Activated CD4-positive, alpha-beta T cell treated with anti-CD3 and anti-CD28 coated beads for 36 hours (primary cell): ENCODE measurements at regions of chr2 and their contacts with region 1.

Region 1: DNA sequence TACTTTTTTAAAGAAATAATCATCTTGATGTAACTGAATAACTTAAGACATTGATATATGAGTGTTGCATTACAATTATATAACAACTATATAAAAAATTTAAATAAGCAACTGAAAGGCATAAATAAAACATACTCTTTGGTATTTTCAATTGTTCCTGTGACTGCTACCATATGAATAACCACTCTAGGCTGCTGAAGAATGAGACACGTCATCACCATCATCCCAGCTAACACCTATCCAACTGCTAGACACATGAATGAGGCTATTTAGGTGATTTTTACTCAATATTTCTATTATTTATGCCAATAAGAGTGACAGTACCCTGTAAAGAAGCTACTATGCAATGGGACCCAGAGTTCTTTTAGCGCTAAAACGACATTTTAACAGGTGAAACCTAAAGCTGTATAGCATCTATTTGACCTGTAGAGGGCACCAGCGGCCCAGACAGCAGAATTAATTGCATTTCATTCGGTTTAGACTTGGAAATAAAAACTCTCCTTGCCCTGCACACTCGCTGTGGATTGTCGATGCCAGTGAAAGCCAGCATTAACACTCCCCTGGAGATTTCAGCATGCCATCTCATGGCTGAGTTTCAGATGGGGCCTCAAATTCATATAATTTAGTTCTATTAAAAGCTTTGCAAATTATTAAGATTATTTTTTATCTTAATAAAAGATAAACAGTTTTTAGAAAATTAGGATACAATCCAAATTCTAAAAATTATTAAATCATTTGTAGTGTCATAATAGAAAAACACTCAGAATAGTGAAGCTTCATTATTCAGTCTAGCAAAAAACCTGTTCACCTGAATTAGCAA is 89.4 kb upstream of the MAP2 start:
- DNase-seq: peak; percentile 68
- ATAC-seq: peak; percentile 47
- H3K4me3 Mint-ChIP-seq: no peak overlapping the region
- H3K27ac Mint-ChIP-seq: no peak overlapping the region
- H3K4me1 Mint-ChIP-seq: no peaks in the 10 kb centered on the region
- H3K27me3 Mint-ChIP-seq: no peaks in the 10 kb centered on the region

Region 2: GRCh38 chr2:208466151-208466919 is 868.1 kb before region 1 on chr2:
- CTCF ChIA-PET with region 1: no interaction called
- POLR2A ChIA-PET with region 1: no interaction called
- intact Hi-C with region 1: loop called in 1 of 2 experiments (anchors 2 kb)
- DNase-seq: peak; percentile 36
- ATAC-seq: no peak
- H3K4me3 Mint-ChIP-seq: no peak overlapping the region
- H3K27ac Mint-ChIP-seq: no peak overlapping the region
- H3K4me1 Mint-ChIP-seq: no peaks in the 10 kb centered on the region
- H3K27me3 Mint-ChIP-seq: peaks cover 9% of the 10 kb centered on the region

Region 3: GRCh38 chr2:209351636-209352035 is 17.2 kb after region 1 on chr2:
- CTCF ChIA-PET with region 1: interaction called, 10 read pairs
- POLR2A ChIA-PET with region 1: interaction called, 3 read pairs
- intact Hi-C with region 1: no loop called
- DNase-seq: no peak
- ATAC-seq: no peak
- H3K4me3 Mint-ChIP-seq: no peak overlapping the region
- H3K27ac Mint-ChIP-seq: no peak overlapping the region
- H3K4me1 Mint-ChIP-seq: no peaks in the 10 kb centered on the region
- H3K27me3 Mint-ChIP-seq: no peaks in the 10 kb centered on the region

Region 4: DNA sequence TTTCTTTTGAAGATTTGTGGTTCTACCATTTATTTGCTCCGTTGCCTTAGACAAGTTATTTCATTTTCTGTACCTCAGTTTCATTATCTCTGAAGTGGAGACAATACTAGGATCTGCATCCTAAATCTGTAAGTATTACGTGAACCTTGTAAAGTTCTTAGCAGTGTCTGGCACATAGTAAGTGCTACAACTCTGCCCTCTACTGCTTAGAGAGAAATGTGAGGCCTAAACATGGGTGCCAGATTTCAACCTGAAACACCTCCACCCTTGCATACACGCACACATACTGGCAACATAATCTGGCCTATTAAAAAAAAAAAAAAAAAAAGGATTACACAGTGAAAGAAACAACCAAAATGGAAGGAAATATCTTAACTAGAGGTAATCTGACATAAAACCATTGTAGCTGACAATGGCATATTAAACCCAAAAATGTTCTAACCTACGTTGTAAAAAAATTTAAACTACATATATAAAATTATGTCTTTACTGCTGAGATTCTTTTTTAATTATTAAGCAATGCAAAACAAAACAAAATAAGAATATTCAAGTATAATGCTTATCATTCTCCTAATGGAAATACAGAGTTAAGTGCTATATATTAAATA is 222.1 kb after region 1 on chr2:
- CTCF ChIA-PET with region 1: interaction called, 5 read pairs
- POLR2A ChIA-PET with region 1: no interaction called
- intact Hi-C with region 1: loop called in 1 of 2 experiments (anchors 5 kb)
- DNase-seq: no peak
- ATAC-seq: no peak
- H3K4me3 Mint-ChIP-seq: no peak overlapping the region
- H3K27ac Mint-ChIP-seq: no peak overlapping the region
- H3K4me1 Mint-ChIP-seq: no peaks in the 10 kb centered on the region
- H3K27me3 Mint-ChIP-seq: peaks cover 3% of the 10 kb centered on the region

Region 5: DNA sequence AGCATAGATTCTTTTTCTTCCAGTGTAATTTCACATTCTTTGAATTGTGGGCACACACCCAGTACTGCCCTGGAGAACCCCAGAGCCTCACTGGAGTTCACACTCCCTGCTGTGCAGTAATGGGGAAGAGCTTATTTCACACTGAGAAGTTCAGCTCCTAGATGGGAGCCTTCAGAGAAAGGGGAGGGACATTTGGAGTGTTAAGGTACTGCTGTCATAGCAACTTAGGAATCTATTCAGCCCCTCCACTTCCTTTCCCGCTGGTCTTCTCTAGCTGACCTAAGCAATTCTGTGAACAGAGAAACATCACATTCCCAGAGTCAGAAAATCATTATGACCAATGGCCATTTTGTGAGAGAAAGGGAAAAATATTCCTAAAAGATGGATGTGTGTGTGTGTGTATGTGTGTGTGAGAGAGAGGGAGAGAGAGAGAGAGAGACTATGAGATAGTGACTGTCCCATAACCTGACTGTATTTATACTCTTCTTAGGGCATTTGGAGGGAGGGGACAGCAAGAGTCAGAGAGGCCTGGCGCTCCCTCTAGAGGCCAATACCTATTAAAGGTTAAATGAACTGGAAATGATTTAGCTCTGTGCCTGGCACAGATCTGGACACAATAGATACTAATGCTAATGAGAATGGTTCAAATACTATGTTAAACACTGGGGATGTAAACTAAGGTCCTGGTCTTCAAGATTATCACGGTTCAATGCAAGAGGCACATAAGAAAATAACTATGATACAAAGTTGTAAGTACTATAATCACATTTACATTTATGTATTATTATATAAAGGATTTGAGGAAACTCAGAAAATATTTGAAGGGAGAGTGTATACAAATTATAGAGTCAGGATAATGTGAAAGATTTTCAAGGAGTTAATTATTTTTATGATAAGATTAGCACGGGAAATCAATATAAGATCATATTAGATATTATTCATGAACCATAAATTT is 626.5 kb after region 1 on chr2:
- CTCF ChIA-PET with region 1: interaction called, 13 read pairs
- POLR2A ChIA-PET with region 1: no interaction called
- intact Hi-C with region 1: loop called (anchors 1 to 5 kb)
- DNase-seq: peak; percentile 68
- ATAC-seq: peak; percentile 80
- H3K4me3 Mint-ChIP-seq: no peak overlapping the region
- H3K27ac Mint-ChIP-seq: no peak overlapping the region
- H3K4me1 Mint-ChIP-seq: no peaks in the 10 kb centered on the region
- H3K27me3 Mint-ChIP-seq: no peaks in the 10 kb centered on the region